ENCODE measurements at regions of chr15 and their contacts with region 1.

Region 1: GRCh38 chr15:84818261-84819131 is 1.3 kb downstream of the ALPK3 start:
- DNase-seq: no peak
- ATAC-seq: peak; percentile 43
- H3K4me3 ChIP-seq: peak overlapping the region; percentile 24 to 57
- H3K27ac ChIP-seq: peak overlapping the region; percentile 96 to 98
- H3K4me1 ChIP-seq: peaks cover 2% of the 10 kb centered on the region in 2 donors
- H3K27me3 ChIP-seq: no peaks in the 10 kb centered on the region

Region 2: GRCh38 chr15:84716036-84716799 is 102.3 kb before region 1 on chr15 and contains the start of gene SEC11A:
- intact Hi-C with region 1: loop called in 1 of 2 experiments (anchors 1 kb)
- DNase-seq: peak; percentile 97 to 98
- ATAC-seq: peak; percentile 99
- H3K4me3 ChIP-seq: peak within 1 kb of the TSS; percentile 62 to 71
- H3K27ac ChIP-seq: peak within 1 kb of the TSS; percentile 78 to 79
- H3K4me1 ChIP-seq: no peaks in the 10 kb centered on the region
- H3K27me3 ChIP-seq: no peaks in the 10 kb centered on the region
- total RNA-seq, gene SEC11A: 99.3 to 115 TPM

Region 3: GRCh38 chr15:84840741-84841429 is 22.4 kb after region 1 on chr15:
- intact Hi-C with region 1: no loop called
- DNase-seq: peak; percentile 91
- ATAC-seq: peak; percentile 89
- H3K4me3 ChIP-seq: no peak overlapping the region
- H3K27ac ChIP-seq: peak overlapping the region; percentile 85 to 98
- H3K4me1 ChIP-seq: peaks cover 0 to 5% of the 10 kb centered on the region in 2 donors
- H3K27me3 ChIP-seq: no peaks in the 10 kb centered on the region